ENCODE measurements at regions of chr22 and their contacts with region 1.

Region 1: GRCh38 chr22:39306581-39307361 is 12.7 kb downstream of the RPL3 start:
- DNase-seq: peak in 5 of 9 donors; percentile 31 to 60 (median 42)
- ATAC-seq: peak; percentile 51
- H3K4me3 ChIP-seq: no peak overlapping the region
- H3K4me3 Mint-ChIP-seq: no peak overlapping the region
- H3K27ac ChIP-seq: no peak overlapping the region
- H3K27ac Mint-ChIP-seq: peak overlapping the region in 3 of 9 donors; percentile 32 to 37 (median 33)
- H3K4me1 ChIP-seq: peaks cover 0 to 5% of the 10 kb centered on the region in 2 donors
- H3K4me1 Mint-ChIP-seq: peaks cover 0 to 13% (median 7%) of the 10 kb centered on the region in 7 donors
- H3K27me3 ChIP-seq: no peaks in the 10 kb centered on the region
- H3K27me3 Mint-ChIP-seq: no peaks in the 10 kb centered on the region

Region 2: GRCh38 chr22:39135090-39135896 is 171.5 kb before region 1 on chr22:
- CTCF ChIA-PET with region 1: interaction called, 4 read pairs
- POLR2A ChIA-PET with region 1: interaction called, 3 read pairs
- intact Hi-C with region 1: loop called in 1 of 2 experiments (anchors 1 kb)
- DNase-seq: peak in 6 of 9 donors; percentile 28 to 42 (median 36)
- ATAC-seq: peak; percentile 73
- H3K4me3 ChIP-seq: no peak overlapping the region
- H3K4me3 Mint-ChIP-seq: no peak overlapping the region
- H3K27ac ChIP-seq: no peak overlapping the region
- H3K27ac Mint-ChIP-seq: peak overlapping the region in 3 of 9 donors; percentile 6 to 48 (median 31)
- H3K4me1 ChIP-seq: no peaks in the 10 kb centered on the region
- H3K4me1 Mint-ChIP-seq: peaks cover 0 to 19% (median 9%) of the 10 kb centered on the region in 7 donors
- H3K27me3 ChIP-seq: no peaks in the 10 kb centered on the region
- H3K27me3 Mint-ChIP-seq: no peaks in the 10 kb centered on the region

Region 3: GRCh38 chr22:39215426-39216120 is 91.2 kb before region 1 on chr22:
- CTCF ChIA-PET with region 1: interaction called, 3 read pairs
- POLR2A ChIA-PET with region 1: interaction called, 5 read pairs
- intact Hi-C with region 1: loop called in 1 of 2 experiments (anchors 1 kb)
- DNase-seq: peak in 3 of 9 donors; percentile 31 to 49 (median 45)
- ATAC-seq: peak; percentile 81
- H3K4me3 ChIP-seq: no peak overlapping the region
- H3K4me3 Mint-ChIP-seq: no peak overlapping the region
- H3K27ac ChIP-seq: no peak overlapping the region
- H3K27ac Mint-ChIP-seq: no peak overlapping the region
- H3K4me1 ChIP-seq: no peaks in the 10 kb centered on the region
- H3K4me1 Mint-ChIP-seq: peaks cover 0 to 7% (median 0%) of the 10 kb centered on the region in 7 donors
- H3K27me3 ChIP-seq: no peaks in the 10 kb centered on the region
- H3K27me3 Mint-ChIP-seq: peaks cover 9 to 50% (median 32%) of the 10 kb centered on the region in 5 donors

Region 4: GRCh38 chr22:39392341-39392948 is 85.7 kb after region 1 on chr22:
- CTCF ChIA-PET with region 1: no interaction called
- POLR2A ChIA-PET with region 1: no interaction called
- intact Hi-C with region 1: no loop called
- DNase-seq: no peak
- ATAC-seq: no peak
- H3K4me3 ChIP-seq: no peak overlapping the region
- H3K4me3 Mint-ChIP-seq: no peak overlapping the region
- H3K27ac ChIP-seq: no peak overlapping the region
- H3K27ac Mint-ChIP-seq: no peak overlapping the region
- H3K4me1 ChIP-seq: peaks cover 0 to 4% of the 10 kb centered on the region in 2 donors
- H3K4me1 Mint-ChIP-seq: peaks cover under 1 to 21% (median 9%) of the 10 kb centered on the region in 7 donors
- H3K27me3 ChIP-seq: no peaks in the 10 kb centered on the region
- H3K27me3 Mint-ChIP-seq: peaks cover 0 to 6% (median 0%) of the 10 kb centered on the region in 5 donors

Measured in naive thymus-derived CD4-positive, alpha-beta T cell (primary cell).